ENCODE measurements at regions of chr16 and their contacts with region 1.

Region 1: DNA sequence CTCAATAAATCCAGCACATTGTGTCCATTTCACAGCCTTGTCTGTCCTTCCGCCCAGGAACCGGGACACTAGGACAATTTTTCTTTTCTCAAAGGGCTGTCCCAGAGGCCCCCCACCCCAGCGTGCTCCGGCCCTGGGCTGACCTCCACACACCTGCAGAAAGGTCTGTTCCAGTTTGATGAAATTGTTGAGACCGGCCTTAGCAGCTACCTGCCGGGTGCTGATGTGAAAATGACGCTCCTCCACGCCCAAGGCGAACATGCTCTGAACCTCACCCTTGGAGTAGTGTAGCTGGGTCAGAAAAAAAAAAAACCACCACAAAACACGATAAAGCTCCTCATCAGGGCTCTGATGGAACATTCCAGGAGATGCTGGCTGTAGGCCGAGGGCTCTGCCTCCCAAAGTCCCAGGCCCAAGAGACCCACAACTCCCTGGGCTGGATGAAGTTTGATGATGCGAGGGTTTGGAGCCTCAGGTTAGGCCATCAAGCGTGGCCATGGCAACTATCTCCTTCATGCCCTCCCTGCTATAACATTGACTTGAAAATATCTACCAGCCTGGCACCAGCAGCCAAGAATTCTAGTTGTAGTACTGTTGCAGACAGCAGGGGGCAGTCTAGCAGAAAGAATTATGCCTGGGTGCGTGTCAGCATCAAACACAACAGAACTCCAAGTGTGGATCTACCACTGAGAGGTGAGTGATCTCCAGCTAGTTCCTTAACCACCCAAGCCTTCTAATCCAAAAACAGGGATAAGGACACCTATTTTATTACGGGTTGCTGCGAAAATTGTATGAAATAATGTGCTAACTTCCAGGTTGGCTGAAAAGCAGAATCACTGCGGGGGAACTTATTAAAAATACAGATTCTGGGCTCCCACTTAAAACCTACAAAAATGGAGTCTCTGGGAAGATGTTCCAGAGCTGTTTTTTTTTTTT is 62.1 kb downstream of the RMI2 start:
- DNase-seq: peak; percentile 75 to 81
- H3K4me3 ChIP-seq: no peak overlapping the region
- H3K27ac ChIP-seq: no peak overlapping the region
- H3K4me1 ChIP-seq: peaks cover 0 to 14% (median 10%) of the 10 kb centered on the region in 4 donors
- H3K27me3 ChIP-seq: no peaks in the 10 kb centered on the region
- CTCF ChIP-seq: peak; percentile 63 to 86

Region 2: GRCh38 chr16:11379420-11379819 is 27.9 kb before region 1 on chr16:
- intact Hi-C with region 1: no loop called
- DNase-seq: no peak
- H3K4me3 ChIP-seq: no peak overlapping the region
- H3K27ac ChIP-seq: no peak overlapping the region
- H3K4me1 ChIP-seq: no peaks in the 10 kb centered on the region
- H3K27me3 ChIP-seq: no peaks in the 10 kb centered on the region
- CTCF ChIP-seq: no peak

Region 3: DNA sequence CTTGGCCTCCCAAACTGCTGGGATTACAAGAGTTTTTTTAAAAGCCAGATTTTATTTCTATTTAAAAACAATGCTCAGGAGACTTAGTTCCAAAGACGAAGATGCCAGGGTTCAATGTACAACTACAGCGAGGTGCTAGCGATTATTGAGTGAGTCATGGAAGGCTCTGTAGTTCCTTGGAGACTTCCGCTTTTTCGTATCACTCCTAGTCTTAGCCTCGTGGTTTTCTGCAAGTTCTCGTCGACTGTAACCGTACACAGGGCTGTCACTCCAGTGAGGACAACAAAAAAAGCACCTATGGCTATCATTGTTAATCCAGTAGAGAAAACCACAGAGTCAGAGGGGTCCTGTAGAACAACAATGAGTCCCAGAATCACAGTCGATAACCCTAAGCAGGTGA is 412.5 kb after region 1 on chr16:
- intact Hi-C with region 1: loop called (anchors 10 kb)
- DNase-seq: no peak
- H3K4me3 ChIP-seq: no peak overlapping the region
- H3K27ac ChIP-seq: no peak overlapping the region
- H3K4me1 ChIP-seq: peaks cover 0 to 9% (median 6%) of the 10 kb centered on the region in 4 donors
- H3K27me3 ChIP-seq: no peaks in the 10 kb centered on the region
- CTCF ChIP-seq: no peak